Activated CD8-positive, alpha-beta T cell treated with anti-CD3 and anti-CD28 coated beads for 36 hours (primary cell): ENCODE measurements at regions of chr20 and their contacts with region 1.

Region 1: GRCh38 chr20:53915446-53916172 is 154.8 kb downstream of the BCAS1 start:
- DNase-seq: peak; percentile 99
- ATAC-seq: peak; percentile 94
- H3K4me3 Mint-ChIP-seq: peak overlapping the region; percentile 80
- H3K27ac Mint-ChIP-seq: peak overlapping the region; percentile 94
- H3K4me1 Mint-ChIP-seq: peaks cover 46% of the 10 kb centered on the region
- H3K27me3 Mint-ChIP-seq: no peaks in the 10 kb centered on the region
- CTCF ChIP-seq: peak; percentile 72

Region 2: GRCh38 chr20:53750827-53751619 is 164.6 kb before region 1 on chr20:
- CTCF ChIA-PET with region 1: interaction called, 6 read pairs
- POLR2A ChIA-PET with region 1: interaction called, 4 read pairs
- intact Hi-C with region 1: loop called (anchors 10 kb)
- DNase-seq: peak; percentile 76
- ATAC-seq: peak; percentile 76
- H3K4me3 Mint-ChIP-seq: peak overlapping the region; percentile 59
- H3K27ac Mint-ChIP-seq: peak overlapping the region; percentile 97
- H3K4me1 Mint-ChIP-seq: peaks cover 62% of the 10 kb centered on the region
- H3K27me3 Mint-ChIP-seq: no peaks in the 10 kb centered on the region
- CTCF ChIP-seq: no peak

Region 3: DNA sequence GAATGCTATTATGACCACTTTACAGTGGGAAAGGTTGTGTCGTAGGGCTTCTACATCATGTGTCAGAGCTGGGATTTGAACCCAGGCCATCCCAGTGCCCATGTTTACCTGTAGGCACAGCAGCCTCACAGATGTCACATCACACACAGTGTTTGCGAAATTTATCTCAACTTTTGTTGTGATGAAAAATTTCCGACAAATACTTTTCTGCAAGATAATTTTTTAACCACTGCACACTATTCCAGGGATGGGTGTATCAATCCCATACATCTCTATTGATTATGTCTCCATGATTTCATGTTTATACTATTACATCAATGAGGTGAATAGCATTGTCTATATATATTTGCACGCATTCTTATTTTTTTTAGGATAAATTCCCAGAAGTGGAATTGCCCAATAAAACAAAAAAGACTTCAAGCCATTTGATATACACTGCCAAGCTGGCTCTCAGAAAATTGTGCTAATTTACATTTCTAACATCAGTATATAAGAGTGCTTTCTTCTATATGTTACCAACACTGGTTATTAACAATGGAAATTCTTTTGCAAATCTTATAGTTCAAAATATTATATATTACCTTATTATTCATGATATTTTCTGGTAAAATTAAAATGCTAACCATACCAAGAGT is 132.9 kb before region 1 on chr20:
- CTCF ChIA-PET with region 1: no interaction called
- POLR2A ChIA-PET with region 1: no interaction called
- intact Hi-C with region 1: no loop called
- DNase-seq: no peak
- ATAC-seq: no peak
- H3K4me3 Mint-ChIP-seq: no peak overlapping the region
- H3K27ac Mint-ChIP-seq: no peak overlapping the region
- H3K4me1 Mint-ChIP-seq: peaks cover 10% of the 10 kb centered on the region
- H3K27me3 Mint-ChIP-seq: no peaks in the 10 kb centered on the region
- CTCF ChIP-seq: no peak

Region 4: DNA sequence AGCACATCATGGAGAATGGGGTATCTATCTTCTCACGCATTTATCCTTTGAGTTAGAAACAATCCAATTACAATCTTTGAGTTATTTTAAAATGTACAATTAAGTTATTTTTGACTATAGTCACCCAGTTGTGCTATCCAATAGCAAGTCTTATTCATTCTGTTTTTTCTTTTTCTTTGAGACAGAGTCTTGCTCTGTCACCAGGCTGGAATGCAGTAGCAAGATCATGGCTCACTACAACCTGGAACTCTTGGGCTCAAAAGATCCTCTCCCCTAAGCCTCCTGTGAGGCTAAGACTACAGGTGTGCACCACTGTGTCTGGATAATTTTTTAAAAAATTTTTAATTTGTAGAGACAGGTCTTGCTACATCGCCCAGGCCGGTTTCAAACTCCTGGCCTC is 120.4 kb before region 1 on chr20:
- CTCF ChIA-PET with region 1: no interaction called
- POLR2A ChIA-PET with region 1: no interaction called
- intact Hi-C with region 1: no loop called
- DNase-seq: no peak
- ATAC-seq: no peak
- H3K4me3 Mint-ChIP-seq: no peak overlapping the region
- H3K27ac Mint-ChIP-seq: no peak overlapping the region
- H3K4me1 Mint-ChIP-seq: peaks cover 8% of the 10 kb centered on the region
- H3K27me3 Mint-ChIP-seq: no peaks in the 10 kb centered on the region
- CTCF ChIP-seq: no peak

Region 5: DNA sequence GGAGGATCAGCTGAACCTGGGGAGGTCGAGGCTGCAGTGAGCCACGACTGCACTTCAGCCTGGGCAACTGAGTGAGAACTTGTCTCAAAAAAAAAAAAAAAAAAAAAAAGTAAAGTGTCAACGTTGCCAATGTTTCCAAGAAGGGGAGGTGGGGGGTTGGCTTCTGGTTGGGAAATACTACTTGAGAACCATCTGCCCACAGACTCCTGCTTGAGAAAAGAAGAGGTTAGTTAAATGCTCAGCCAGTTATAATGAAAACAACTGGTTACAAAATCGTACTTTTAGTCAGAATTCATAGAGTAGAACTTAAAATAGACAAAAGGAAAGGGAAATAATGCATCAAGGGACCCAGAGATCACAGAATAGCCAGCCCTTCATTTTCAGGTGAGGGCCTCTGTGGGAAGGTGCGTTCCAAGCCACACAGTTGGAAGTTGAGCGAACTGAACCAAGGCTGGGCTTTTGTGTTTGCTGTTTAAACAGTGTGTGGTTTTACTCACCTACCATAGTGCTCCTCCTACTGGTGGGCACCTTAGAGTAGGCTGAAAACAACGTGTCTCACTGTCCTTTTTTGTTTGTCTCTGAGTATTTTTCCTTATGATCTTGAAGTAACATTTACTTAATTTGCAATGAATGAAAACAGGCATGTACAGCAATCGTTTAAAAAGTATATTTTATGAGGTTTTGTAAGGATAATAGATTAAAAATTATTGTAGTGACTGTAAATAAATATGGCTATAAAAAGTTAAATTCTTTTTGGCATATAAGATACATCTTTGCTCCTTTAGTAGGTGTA is 45.9 kb before region 1 on chr20:
- CTCF ChIA-PET with region 1: interaction called, 38 read pairs
- POLR2A ChIA-PET with region 1: interaction called, 6 read pairs
- intact Hi-C with region 1: loop called (anchors 5 kb)
- DNase-seq: peak; percentile 87
- ATAC-seq: peak; percentile 77
- H3K4me3 Mint-ChIP-seq: peak overlapping the region; percentile 68
- H3K27ac Mint-ChIP-seq: peak overlapping the region; percentile 96
- H3K4me1 Mint-ChIP-seq: peaks cover 74% of the 10 kb centered on the region
- H3K27me3 Mint-ChIP-seq: no peaks in the 10 kb centered on the region
- CTCF ChIP-seq: peak; percentile 89

Region 6: DNA sequence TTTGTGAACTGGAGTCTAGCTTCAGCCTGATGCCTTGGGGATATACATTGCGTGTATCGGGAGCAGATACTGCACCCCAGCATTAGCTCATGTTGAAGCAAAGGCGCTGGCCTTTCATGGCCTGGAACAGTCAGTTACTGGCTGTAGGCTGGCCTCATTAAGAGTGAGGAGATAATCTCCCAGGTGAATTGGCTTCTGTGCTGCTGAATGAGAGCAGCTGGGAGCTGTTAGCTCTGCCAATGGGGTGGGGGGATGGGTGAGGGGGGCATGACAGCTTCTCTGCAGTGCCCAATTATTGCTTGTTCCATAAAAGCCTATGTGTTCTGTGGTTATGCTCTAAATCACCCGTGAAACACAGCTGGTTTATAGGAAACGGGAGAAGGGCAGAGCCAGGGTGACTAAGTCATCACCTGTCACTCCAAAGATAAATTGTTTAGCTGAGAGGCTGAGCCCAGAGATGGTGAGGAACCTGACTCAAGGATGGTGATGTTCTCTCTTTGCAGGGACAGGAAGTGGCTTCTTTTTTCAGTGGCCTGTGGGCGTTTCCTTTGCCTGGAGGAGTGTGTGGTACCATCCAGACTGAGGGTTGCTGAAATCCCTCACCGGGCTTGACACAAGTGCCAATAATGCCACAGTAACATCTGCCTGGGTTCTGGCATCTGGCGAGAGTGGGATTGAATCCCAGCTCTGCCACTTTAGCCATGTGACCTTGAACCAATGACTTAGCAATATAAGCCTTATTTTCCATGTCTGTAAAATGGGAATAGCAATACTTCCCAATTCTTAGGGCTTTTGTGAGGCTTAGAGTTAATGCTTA is 16.1 kb before region 1 on chr20:
- CTCF ChIA-PET with region 1: interaction called, 61 read pairs
- POLR2A ChIA-PET with region 1: interaction called, 26 read pairs
- intact Hi-C with region 1: no loop called
- DNase-seq: peak; percentile 94
- ATAC-seq: peak; percentile 89
- H3K4me3 Mint-ChIP-seq: no peak overlapping the region
- H3K27ac Mint-ChIP-seq: peak overlapping the region; percentile 94
- H3K4me1 Mint-ChIP-seq: peaks cover 74% of the 10 kb centered on the region
- H3K27me3 Mint-ChIP-seq: no peaks in the 10 kb centered on the region
- CTCF ChIP-seq: no peak

Region 7: GRCh38 chr20:53939572-53940359 is 24.2 kb after region 1 on chr20:
- CTCF ChIA-PET with region 1: interaction called, 24 read pairs
- POLR2A ChIA-PET with region 1: interaction called, 3 read pairs
- intact Hi-C with region 1: no loop called
- DNase-seq: peak; percentile 92
- ATAC-seq: peak; percentile 84
- H3K4me3 Mint-ChIP-seq: no peak overlapping the region
- H3K27ac Mint-ChIP-seq: peak overlapping the region; percentile 22
- H3K4me1 Mint-ChIP-seq: peaks cover 45% of the 10 kb centered on the region
- H3K27me3 Mint-ChIP-seq: no peaks in the 10 kb centered on the region
- CTCF ChIP-seq: peak; percentile 85

Region 8: DNA sequence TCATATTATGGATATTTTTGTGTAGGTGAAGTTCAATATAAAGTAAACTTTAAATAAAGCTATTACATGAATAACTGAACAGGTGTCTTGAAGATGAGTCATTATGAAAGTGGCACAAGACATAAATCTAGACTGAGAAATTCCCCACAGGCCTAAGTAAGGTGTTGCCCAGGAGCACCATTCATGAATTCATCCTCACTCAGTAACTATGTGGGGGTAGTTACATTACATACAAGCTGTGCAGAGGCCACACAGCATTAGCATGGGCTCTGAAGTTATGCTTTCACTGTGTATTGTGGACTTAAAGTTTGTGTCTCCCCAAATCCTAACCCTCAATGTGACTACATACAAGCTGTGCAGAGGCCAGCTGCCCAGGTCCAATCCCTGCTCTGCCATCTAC is 88.8 kb after region 1 on chr20:
- CTCF ChIA-PET with region 1: no interaction called
- POLR2A ChIA-PET with region 1: no interaction called
- intact Hi-C with region 1: no loop called
- DNase-seq: peak; percentile 7
- ATAC-seq: peak; percentile 80
- H3K4me3 Mint-ChIP-seq: no peak overlapping the region
- H3K27ac Mint-ChIP-seq: no peak overlapping the region
- H3K4me1 Mint-ChIP-seq: peaks cover 3% of the 10 kb centered on the region
- H3K27me3 Mint-ChIP-seq: peaks cover 6% of the 10 kb centered on the region
- CTCF ChIP-seq: no peak